ENCODE measurements at regions of chr6 and their contacts with region 1.

Region 1: DNA sequence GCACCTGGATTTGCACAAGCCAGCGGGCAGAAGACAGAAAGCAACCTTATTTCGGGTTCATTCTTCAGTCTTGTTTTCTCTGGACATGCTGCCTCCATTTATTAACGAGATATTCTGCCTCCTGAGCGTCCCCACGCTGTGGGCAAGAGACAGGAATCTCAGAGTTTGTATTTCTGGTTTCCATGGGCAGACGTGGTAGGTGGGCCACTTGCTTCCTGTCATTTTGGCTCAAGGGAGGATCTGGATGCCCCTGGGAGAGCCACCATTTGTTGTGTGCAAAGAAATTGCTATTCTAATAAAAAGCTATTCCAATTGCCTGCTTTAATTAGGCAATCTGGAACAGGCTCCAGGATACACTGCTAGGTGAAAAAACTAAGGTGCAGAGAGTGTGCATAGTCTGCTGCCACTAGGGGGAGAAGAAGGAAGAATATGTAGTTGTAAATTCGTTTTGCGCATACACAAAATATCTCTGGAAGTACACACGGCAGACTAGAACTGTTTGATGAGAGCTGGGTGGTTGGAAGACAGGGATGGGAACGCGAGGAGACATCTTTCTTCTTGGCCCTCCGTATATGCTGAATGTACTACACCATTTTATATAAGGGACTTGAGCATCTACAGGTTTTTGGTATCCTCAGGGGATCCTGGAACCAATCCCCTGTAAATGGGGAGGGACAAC is 30.1 kb upstream of the SLC16A10 start:
- DNase-seq: peak; percentile 17 to 62
- H3K4me3 ChIP-seq: no peak overlapping the region
- H3K4me1 ChIP-seq: peaks cover 14% of the 10 kb centered on the region
- H3K27me3 ChIP-seq: no peaks in the 10 kb centered on the region

Region 2: GRCh38 chr6:111210194-111210728 is 153.0 kb after region 1 on chr6:
- in situ Hi-C with region 1: loop called (anchors 5 kb)
- DNase-seq: peak; percentile 29 to 59
- H3K4me3 ChIP-seq: no peak overlapping the region
- H3K4me1 ChIP-seq: peaks cover 14% of the 10 kb centered on the region
- H3K27me3 ChIP-seq: no peaks in the 10 kb centered on the region

Region 3: GRCh38 chr6:111353912-111354462 is 296.8 kb after region 1 on chr6:
- in situ Hi-C with region 1: loop called (anchors 10 kb)
- DNase-seq: no peak
- H3K4me3 ChIP-seq: no peak overlapping the region
- H3K4me1 ChIP-seq: no peaks in the 10 kb centered on the region
- H3K27me3 ChIP-seq: no peaks in the 10 kb centered on the region